AG04450 (cell line): ENCODE measurements at regions of chr6 and their contacts with region 1.

Region 1: GRCh38 chr6:53725791-53726431 is 60.4 kb upstream of the KLHL31 start:
- DNase-seq: peak; percentile 57
- H3K4me3 ChIP-seq: no peak overlapping the region
- H3K27ac ChIP-seq: no peak overlapping the region
- H3K27me3 ChIP-seq: no peaks in the 10 kb centered on the region
- CTCF ChIP-seq: peak; percentile 97

Region 2: GRCh38 chr6:53484476-53485280 is 241.2 kb before region 1 on chr6:
- CTCF ChIA-PET with region 1: interaction called, 14 read pairs
- POLR2A ChIA-PET with region 1: no interaction called
- DNase-seq: no peak
- H3K4me3 ChIP-seq: no peak overlapping the region
- H3K27ac ChIP-seq: no peak overlapping the region
- H3K27me3 ChIP-seq: peaks cover 12% of the 10 kb centered on the region
- CTCF ChIP-seq: peak; percentile 98

Region 3: DNA sequence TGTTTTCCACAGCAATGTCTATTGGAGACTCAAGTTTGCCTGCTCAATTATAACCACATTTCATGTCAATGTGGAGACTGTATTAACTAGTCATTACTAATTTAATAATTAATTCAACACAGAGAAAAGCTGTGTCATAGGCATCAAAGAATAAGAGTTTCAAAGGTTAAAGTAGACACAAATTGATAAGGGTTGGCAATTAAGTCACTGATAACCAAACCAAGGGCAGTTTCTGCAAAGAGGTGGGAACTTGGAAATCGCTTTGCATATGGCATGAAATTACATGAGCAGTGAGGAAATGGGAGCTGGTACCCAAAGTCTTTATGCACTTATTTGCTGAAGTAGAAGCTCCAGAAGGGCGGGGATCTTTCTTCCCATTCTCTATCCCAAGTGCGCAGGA is 215.2 kb before region 1 on chr6:
- CTCF ChIA-PET with region 1: interaction called, 51 read pairs
- POLR2A ChIA-PET with region 1: no interaction called
- DNase-seq: no peak
- H3K4me3 ChIP-seq: no peak overlapping the region
- H3K27ac ChIP-seq: no peak overlapping the region
- H3K27me3 ChIP-seq: no peaks in the 10 kb centered on the region
- CTCF ChIP-seq: no peak

Region 4: DNA sequence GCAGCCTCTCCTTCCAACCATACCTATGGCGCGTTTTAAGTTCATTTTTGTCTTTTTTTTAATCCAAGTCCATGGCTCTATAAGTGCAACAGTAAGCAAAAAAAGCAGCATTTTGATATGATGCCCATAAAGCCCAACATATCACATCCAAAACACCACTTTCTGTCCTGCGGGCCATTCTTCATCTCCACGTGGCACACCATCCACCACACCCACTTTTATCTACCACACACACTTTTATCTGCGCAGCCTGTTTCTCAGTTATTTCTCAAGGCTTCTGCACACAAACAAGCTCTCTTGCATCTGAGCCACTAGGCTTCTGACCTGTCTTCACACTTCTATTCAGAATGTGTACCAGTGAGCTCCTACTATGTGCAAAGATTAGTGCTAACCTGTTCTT is 186.3 kb before region 1 on chr6:
- CTCF ChIA-PET with region 1: interaction called, 12 read pairs
- POLR2A ChIA-PET with region 1: no interaction called
- DNase-seq: no peak
- H3K4me3 ChIP-seq: no peak overlapping the region
- H3K27ac ChIP-seq: no peak overlapping the region
- H3K27me3 ChIP-seq: no peaks in the 10 kb centered on the region
- CTCF ChIP-seq: no peak

Region 5: GRCh38 chr6:53710788-53711187 is 15.1 kb before region 1 on chr6:
- CTCF ChIA-PET with region 1: interaction called, 99 read pairs
- POLR2A ChIA-PET with region 1: no interaction called
- DNase-seq: no peak
- H3K4me3 ChIP-seq: no peak overlapping the region
- H3K27ac ChIP-seq: no peak overlapping the region
- H3K27me3 ChIP-seq: no peaks in the 10 kb centered on the region
- CTCF ChIP-seq: no peak

Region 6: DNA sequence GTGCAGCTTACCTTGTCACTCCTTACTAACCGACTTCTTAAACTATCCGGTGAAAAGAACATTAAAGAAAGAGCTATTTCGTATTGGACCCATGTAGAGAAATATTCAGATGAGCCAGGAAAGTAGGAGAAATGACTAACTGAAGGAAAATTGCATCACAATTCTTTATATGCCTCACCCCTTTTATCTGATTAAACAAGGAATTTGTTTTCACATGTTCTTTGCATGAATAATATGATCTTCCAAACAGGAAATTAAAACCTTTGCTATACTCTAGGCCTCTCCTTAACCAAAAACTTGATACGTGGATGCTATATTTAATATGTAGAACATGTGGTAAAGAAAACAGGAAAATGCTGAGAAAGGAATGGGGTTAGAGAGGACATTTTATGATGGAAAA is 26.9 kb after region 1 on chr6:
- CTCF ChIA-PET with region 1: interaction called, 30 read pairs
- POLR2A ChIA-PET with region 1: no interaction called
- DNase-seq: peak; percentile 7
- H3K4me3 ChIP-seq: no peak overlapping the region
- H3K27ac ChIP-seq: no peak overlapping the region
- H3K27me3 ChIP-seq: no peaks in the 10 kb centered on the region
- CTCF ChIP-seq: no peak

Region 7: GRCh38 chr6:53896237-53896636 is 170.3 kb after region 1 on chr6:
- CTCF ChIA-PET with region 1: no interaction called
- POLR2A ChIA-PET with region 1: no interaction called
- DNase-seq: no peak
- H3K4me3 ChIP-seq: no peak overlapping the region
- H3K27ac ChIP-seq: no peak overlapping the region
- H3K27me3 ChIP-seq: no peaks in the 10 kb centered on the region
- CTCF ChIP-seq: no peak

Region 8: GRCh38 chr6:53956068-53956711 is 230.3 kb after region 1 on chr6:
- CTCF ChIA-PET with region 1: interaction called, 202 read pairs
- POLR2A ChIA-PET with region 1: interaction called, 3 read pairs
- DNase-seq: peak; percentile 32
- H3K4me3 ChIP-seq: no peak overlapping the region
- H3K27ac ChIP-seq: no peak overlapping the region
- H3K27me3 ChIP-seq: no peaks in the 10 kb centered on the region
- CTCF ChIP-seq: peak; percentile 92